Activated CD4-positive, alpha-beta T cell treated with anti-CD3 and anti-CD28 coated beads for 36 hours (primary cell): ENCODE measurements at regions of chr1 and their contacts with region 1.

Region 1: DNA sequence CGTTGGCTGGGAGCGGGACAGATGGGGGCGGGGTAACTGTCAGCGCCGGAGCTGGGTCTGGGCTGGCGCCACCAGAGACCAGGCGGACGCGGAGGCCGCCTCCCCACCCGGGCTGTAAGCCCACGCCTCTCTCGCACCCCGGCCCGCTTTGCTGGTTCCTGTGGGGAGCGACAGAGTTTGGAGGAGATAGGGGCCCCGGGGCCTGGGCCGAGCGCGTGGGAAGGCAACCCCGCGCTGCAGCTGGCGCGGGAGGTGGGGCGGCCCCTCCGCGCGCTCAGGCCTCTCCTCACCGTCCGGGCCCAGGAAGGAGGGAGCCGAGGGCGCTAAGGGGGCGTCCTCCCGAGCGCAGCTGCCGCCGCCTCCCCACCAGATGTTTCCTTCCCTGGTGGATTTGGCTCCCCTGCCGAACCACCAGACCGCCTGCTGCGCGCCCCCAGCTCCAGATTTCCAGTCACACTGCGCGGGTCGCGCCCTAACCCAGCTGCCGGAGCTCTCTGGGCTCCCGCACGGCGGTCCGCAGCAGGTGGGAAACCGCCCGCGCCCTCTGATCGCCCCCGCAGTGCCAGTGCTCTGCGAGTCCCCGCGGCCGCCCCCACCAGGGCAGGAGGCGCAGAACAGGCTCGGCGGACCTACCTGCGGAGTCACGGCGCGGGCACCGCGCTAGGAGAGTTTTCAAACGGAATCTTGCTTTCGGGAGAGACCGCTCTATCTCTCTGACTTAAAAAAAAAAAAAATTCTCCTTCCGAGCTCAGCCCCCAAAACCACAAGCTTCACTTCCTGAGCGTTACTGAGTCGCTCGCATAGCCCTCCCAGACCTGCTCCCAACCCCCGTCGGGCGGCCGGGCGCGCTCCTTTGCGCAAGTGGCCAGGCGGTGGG is 1.1 kb downstream of the GFI1 start:
- DNase-seq: peak; percentile 95
- ATAC-seq: peak; percentile 58
- H3K4me3 Mint-ChIP-seq: peak overlapping the region; percentile 98
- H3K27ac Mint-ChIP-seq: peak overlapping the region; percentile 97
- H3K4me1 Mint-ChIP-seq: peaks cover 30% of the 10 kb centered on the region
- H3K27me3 Mint-ChIP-seq: no peaks in the 10 kb centered on the region

Region 2: GRCh38 chr1:92298573-92299476 is 186.8 kb before region 1 on chr1 and contains the starts of genes GLMN and RPAP2:
- CTCF ChIA-PET with region 1: interaction called, 6 read pairs
- POLR2A ChIA-PET with region 1: interaction called, 5 read pairs
- intact Hi-C with region 1: loop called in 1 of 2 experiments (anchors 1 kb)
- DNase-seq: peak; percentile 83
- ATAC-seq: peak; percentile 98
- H3K4me3 Mint-ChIP-seq: peak within 1 kb of the TSS; percentile 84
- H3K27ac Mint-ChIP-seq: peak within 1 kb of the TSS; percentile 94
- H3K4me1 Mint-ChIP-seq: peaks cover 31% of the 10 kb centered on the region
- H3K27me3 Mint-ChIP-seq: no peaks in the 10 kb centered on the region
- total RNA-seq, gene GLMN: 10.8 to 17.6 TPM
- total RNA-seq, gene RPAP2: 33.4 to 39.0 TPM

Region 3: DNA sequence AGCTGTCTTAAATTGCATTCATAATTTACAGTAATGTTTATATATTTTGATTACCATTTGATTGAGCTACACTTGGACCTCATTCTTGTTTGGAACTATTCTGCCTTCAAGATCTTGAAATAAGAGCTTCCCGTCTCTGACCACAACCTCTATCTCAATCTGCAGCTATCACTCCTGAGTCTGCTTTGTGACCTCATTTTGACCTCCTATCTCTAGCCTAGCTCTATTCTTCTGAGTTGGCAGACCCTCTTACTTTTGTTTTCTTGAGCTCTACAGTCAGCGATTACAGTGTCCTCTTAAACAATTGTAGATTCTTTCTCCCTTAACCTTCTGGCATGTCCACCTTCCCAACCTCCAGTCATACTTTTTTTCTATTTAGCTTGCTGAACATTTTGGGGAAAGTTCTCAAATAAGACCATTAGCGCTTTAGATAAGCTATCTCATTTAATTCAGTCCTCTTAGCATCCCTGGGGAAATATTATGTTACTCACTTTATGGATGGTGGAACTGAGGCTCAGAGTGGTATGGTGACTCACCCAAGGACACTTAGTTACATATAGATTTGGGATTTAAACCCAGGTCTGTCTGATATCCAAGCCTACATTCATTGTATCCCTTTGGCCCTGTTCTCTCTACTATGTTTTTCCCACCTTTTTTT is 167.7 kb before region 1 on chr1:
- CTCF ChIA-PET with region 1: interaction called, 5 read pairs
- POLR2A ChIA-PET with region 1: interaction called, 7 read pairs
- intact Hi-C with region 1: loop called (anchors 2 to 5 kb)
- DNase-seq: no peak
- ATAC-seq: peak; percentile 65
- H3K4me3 Mint-ChIP-seq: no peak overlapping the region
- H3K27ac Mint-ChIP-seq: peak overlapping the region; percentile 52
- H3K4me1 Mint-ChIP-seq: peaks cover 58% of the 10 kb centered on the region
- H3K27me3 Mint-ChIP-seq: no peaks in the 10 kb centered on the region

Region 4: DNA sequence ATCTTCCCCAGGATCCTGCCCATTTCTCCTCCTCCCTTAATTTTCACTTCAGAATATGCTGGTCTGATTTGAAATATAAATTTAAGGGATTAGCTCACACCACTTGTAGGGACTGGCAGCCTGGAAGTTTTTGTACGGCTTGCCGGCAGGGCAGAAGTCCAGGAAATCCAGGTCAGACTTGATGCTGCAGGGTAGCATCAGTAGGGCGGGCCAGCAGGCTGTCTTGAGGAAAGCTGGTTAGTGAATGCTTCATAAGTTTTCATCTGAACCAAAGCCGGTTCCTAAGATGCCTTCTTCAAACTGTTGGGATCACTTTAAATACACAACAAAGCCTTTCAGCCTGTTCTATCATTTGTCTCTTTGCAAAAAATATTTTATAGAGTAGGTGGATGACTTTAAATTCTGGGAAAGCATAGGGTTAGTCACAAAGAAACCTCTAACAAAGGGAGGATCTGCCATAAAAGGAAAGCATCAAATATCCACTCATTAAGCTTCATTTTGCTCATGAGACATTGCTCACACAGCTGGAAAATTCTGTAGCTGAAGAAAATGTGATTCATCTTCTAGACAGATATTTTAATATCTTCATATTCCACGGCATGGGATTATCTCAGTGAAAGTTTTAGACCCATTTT is 91.8 kb after region 1 on chr1:
- CTCF ChIA-PET with region 1: interaction called, 7 read pairs
- POLR2A ChIA-PET with region 1: interaction called, 6 read pairs
- intact Hi-C with region 1: loop called (anchors 2 kb)
- DNase-seq: peak; percentile 42
- ATAC-seq: peak; percentile 62
- H3K4me3 Mint-ChIP-seq: peak overlapping the region; percentile 88
- H3K27ac Mint-ChIP-seq: peak overlapping the region; percentile 89
- H3K4me1 Mint-ChIP-seq: peaks cover 61% of the 10 kb centered on the region
- H3K27me3 Mint-ChIP-seq: no peaks in the 10 kb centered on the region

Region 5: DNA sequence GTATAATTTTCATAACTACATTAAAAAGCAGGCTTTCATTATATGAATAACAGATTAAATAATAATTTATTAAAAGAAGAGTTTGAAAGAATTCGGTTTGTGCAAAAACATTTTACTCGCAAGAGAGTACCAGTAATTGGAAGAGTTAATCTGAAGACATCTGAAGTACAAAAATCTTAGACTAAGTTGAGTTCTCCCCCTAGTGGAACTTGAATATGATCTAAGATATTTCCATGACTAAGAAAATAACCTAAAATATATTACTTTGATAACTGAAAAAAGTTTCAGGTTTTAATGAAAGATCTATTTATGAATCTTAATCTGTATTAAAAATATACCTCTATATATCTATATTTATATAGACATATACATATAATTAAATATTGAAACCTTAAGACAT is 113.6 kb after region 1 on chr1:
- CTCF ChIA-PET with region 1: interaction called, 4 read pairs
- POLR2A ChIA-PET with region 1: no interaction called
- intact Hi-C with region 1: loop called in 1 of 2 experiments (anchors 5 kb)
- DNase-seq: no peak
- ATAC-seq: peak; percentile 66
- H3K4me3 Mint-ChIP-seq: no peak overlapping the region
- H3K27ac Mint-ChIP-seq: no peak overlapping the region
- H3K4me1 Mint-ChIP-seq: peaks cover 36% of the 10 kb centered on the region
- H3K27me3 Mint-ChIP-seq: no peaks in the 10 kb centered on the region